ENCODE measurements at regions of chr1 and their contacts with region 1.

Region 1: DNA sequence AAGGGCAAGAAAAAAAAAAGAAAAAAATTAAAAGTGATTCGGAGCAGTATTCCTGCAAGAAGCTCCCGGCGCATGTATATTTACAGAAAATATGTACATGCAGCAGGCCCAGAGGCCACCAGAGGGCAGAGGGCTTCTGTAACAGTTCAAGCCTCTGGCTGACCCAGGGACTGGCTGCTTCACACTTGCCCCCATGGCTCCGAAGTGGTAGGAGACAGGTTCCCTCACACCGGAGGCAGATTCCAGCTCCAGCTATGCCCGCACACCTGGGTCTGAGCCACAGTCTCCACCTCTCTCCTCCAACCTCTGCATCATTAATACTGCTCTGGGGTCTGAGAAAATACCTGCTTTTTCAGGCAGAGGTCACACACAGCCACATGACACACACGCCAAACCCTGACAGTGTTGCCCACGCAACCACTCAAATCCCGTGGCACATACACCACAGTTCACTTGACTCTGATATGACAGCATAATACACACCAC is 2.2 kb upstream of the ARHGAP30 start:
- DNase-seq: peak; percentile 71 to 75 (median 74)
- H3K4me3 ChIP-seq: no peak overlapping the region
- H3K27ac ChIP-seq: no peak overlapping the region
- H3K4me1 ChIP-seq: peaks cover 12 to 67% (median 50%) of the 10 kb centered on the region in 4 experiments
- H3K27me3 ChIP-seq: no peaks in the 10 kb centered on the region

Region 2: GRCh38 chr1:160748181-160748877 is 323.6 kb before region 1 on chr1:
- CTCF ChIA-PET with region 1: no interaction called
- POLR2A ChIA-PET with region 1: no interaction called
- DNase-seq: no peak
- H3K4me3 ChIP-seq: no peak overlapping the region
- H3K27ac ChIP-seq: no peak overlapping the region
- H3K4me1 ChIP-seq: peaks cover 0 to 10% (median 1%) of the 10 kb centered on the region in 4 experiments
- H3K27me3 ChIP-seq: peaks cover 0 to 2% (median 0%) of the 10 kb centered on the region in 5 experiments

Region 3: DNA sequence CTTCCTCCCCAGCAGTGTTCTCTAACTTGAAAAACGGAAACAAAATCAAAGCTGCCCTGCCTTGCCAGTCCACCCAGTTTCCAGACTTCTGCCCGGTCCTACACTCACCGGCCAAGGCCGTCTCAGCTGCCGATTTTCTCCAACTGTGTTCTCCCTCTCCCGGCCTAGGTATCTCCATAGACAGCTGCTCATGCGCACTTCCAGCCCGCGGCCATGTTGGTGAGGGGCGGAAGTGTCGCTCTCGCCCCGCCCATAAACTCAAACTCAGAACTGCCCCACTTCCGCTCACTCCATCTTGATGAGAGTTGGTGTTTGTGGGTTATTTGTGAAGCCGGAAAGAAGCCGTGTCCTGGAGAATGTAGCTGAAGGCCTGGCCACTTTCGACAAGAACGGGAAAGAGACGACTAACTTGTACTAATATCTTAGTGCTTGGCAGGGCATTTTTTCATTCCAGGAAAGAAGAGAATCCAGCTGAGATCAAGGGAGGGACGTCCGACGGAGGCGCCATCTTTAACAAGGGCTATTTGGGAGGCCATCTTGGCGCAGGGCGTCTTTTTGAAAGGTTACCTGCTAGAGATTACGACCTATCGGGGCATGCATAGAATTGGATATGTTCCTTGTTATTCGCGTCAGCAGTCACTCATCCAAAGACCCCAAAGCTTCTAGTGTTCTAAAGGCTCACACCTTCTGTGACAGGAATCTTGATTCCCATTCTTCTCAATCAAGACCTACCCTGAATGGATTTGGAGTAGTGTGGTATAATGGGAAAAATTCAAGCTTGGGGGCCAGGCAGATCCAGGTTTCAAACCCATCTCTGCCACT is 26.0 kb before region 1 on chr1 and contains the start of gene USF1:
- CTCF ChIA-PET with region 1: interaction called, 166 read pairs
- POLR2A ChIA-PET with region 1: interaction called, 53 read pairs
- DNase-seq: peak; percentile 97 to 98 (median 98)
- H3K4me3 ChIP-seq: peak within 1 kb of the TSS; percentile 75 to 97 (median 91)
- H3K27ac ChIP-seq: peak within 1 kb of the TSS; percentile 95 to 97
- H3K4me1 ChIP-seq: peaks cover 8 to 31% (median 20%) of the 10 kb centered on the region in 4 experiments
- H3K27me3 ChIP-seq: no peaks in the 10 kb centered on the region

Region 4: DNA sequence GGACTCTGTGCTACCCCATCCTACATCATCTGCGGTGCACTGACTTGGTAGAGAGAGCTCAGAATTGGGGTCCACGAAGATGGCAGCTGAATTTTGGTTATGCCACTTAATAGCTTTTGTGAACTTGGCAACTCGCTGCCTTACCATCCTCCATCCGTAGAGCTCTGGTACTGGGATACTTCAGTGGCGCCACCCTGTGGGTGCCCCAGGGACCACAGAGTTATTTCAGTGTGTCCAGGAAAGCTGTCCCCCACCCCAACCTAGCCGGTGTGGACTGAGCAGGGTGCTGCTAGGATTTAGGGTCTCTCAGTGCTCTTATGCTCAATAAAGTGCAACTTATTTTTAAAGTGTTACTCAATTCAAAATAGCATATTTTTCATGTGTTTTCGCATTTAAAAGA is 17.1 kb before region 1 on chr1:
- CTCF ChIA-PET with region 1: interaction called, 13 read pairs
- POLR2A ChIA-PET with region 1: no interaction called
- DNase-seq: no peak
- H3K4me3 ChIP-seq: no peak overlapping the region
- H3K27ac ChIP-seq: no peak overlapping the region
- H3K4me1 ChIP-seq: no peaks in the 10 kb centered on the region
- H3K27me3 ChIP-seq: no peaks in the 10 kb centered on the region

Region 5: DNA sequence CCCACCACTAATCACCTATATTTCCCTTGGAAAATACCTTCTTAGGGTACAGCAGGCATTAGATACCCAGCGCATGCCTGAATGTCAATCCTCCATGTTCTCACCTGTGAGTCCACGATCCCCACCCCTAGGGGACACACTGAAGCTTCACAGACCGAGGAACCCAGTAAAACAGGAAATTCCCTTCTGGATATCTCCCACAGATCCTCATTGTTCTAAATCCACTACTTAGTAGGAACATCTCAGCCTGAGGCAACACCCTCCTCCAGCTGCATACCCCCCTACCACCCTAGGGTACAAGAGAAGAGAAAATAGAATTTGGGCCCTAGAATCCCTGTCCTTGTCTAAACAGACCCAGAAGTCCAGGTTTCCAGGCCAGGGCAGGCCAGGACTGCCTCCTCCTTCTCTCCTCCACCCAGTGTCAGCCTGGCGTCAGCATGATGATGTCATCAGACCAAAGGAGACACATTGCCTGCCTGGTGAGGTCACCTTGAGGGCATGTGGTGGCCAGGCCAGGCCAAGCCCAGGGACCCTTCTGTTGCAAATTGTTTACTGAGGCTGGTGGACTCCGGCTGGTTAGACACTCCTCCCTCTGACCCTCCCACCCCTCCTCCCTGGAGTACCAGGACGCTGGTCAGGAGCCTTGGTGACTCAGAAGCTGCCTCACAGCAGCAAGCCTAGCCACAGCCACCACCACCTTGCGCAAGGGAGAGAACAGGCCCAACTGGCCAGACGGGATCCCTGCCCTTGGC is 11.2 kb after region 1 on chr1:
- CTCF ChIA-PET with region 1: interaction called, 89 read pairs
- POLR2A ChIA-PET with region 1: no interaction called
- DNase-seq: peak in 1 of 3 donors; percentile 32
- H3K4me3 ChIP-seq: no peak overlapping the region
- H3K27ac ChIP-seq: no peak overlapping the region
- H3K4me1 ChIP-seq: peaks cover 0 to 18% (median 0%) of the 10 kb centered on the region in 4 experiments
- H3K27me3 ChIP-seq: peaks cover 0 to 5% (median 0%) of the 10 kb centered on the region in 5 experiments

Region 6: DNA sequence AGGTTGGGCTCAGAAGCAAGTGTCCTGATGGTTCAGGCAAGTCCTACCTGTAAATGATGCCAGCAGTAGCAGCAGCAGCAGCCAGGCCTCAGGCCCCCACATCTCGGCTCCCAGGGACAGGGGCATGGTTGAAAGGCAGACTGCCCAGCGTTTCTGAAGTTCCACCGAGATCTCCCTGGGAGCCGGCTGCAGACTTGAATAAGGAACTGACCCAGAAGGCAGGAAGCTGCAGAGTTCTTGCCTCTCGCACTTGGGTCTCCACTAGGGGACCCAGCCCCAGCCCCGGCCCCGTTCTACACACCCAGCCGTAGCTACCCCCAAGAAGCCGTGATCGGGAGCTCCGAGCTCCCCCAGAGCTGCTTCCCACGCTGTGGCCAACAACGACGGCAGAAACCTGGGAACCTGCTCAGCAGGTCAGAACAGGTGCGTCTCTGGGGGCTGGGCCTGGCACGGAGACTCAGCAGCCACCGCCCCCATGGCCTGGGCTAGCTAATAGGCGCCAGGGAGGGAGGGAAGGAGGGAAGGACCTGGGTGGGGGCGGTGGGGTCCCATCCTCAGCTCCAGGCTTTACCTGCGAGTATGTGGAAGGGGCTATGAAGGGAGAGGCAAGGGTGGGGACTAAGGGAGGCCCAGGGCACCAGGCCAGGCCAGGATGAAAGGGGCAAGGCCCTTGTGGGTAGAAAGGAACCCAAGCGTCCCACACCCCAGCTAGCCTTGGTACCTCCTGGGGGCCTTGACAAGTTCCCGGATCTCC is 17.4 kb after region 1 on chr1 and contains the start of gene NECTIN4:
- CTCF ChIA-PET with region 1: interaction called, 297 read pairs
- POLR2A ChIA-PET with region 1: interaction called, 3 read pairs
- DNase-seq: peak in 1 of 3 donors; percentile 37
- H3K4me3 ChIP-seq: no peak within 1 kb of the TSS
- H3K27ac ChIP-seq: no peak within 1 kb of the TSS
- H3K4me1 ChIP-seq: peaks cover 0 to 17% (median 2%) of the 10 kb centered on the region in 4 experiments
- H3K27me3 ChIP-seq: no peaks in the 10 kb centered on the region

Region 7: GRCh38 chr1:161132410-161133219 is 60.7 kb after region 1 on chr1 and contains the start of gene DEDD:
- CTCF ChIA-PET with region 1: interaction called, 107 read pairs
- POLR2A ChIA-PET with region 1: no interaction called
- DNase-seq: peak; percentile 97 to 98 (median 97)
- H3K4me3 ChIP-seq: peak within 1 kb of the TSS; percentile 82 to 97 (median 95)
- H3K27ac ChIP-seq: peak within 1 kb of the TSS; percentile 85 to 92
- H3K4me1 ChIP-seq: peaks cover 10 to 29% (median 21%) of the 10 kb centered on the region in 4 experiments
- H3K27me3 ChIP-seq: no peaks in the 10 kb centered on the region

Region 8: GRCh38 chr1:161225534-161226319 is 153.8 kb after region 1 on chr1 and contains the start of gene TOMM40L:
- CTCF ChIA-PET with region 1: no interaction called
- POLR2A ChIA-PET with region 1: no interaction called
- DNase-seq: peak; percentile 100
- H3K4me3 ChIP-seq: peak within 1 kb of the TSS; percentile 60 to 99 (median 90)
- H3K27ac ChIP-seq: peak within 1 kb of the TSS in 1 of 2 experiments; percentile 67
- H3K4me1 ChIP-seq: peaks cover 2 to 33% (median 30%) of the 10 kb centered on the region in 4 experiments
- H3K27me3 ChIP-seq: no peaks in the 10 kb centered on the region

Region 9: DNA sequence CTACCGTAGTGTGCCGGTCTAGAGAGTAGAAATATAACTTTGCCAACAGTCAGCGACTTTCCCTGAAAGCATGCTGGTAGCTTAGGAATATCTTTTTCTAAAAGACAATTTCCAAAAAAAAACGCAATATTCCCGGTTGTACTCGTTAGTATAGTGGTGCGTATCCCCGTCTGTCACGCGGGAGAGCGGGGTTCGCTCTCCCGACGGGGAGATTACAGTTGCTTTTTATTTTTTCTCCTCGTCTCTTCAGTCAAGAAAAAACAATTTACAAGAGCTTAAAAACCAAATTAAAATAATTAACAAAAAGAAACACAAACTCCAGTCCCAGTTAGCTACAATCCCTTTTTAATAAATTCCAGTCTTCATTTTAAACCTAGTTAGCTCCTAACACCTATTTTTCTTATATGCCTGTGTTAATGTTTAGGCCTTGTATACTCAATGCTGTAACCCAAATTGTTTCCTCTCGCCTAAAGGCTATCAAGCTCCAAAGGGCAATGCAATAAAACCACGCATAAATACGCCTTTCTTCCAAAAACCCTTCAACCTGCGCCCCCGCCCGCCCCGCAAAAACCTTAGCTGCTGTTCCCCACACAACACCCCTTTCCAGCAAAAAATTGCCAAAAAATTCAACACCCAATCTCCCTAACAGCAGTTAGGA is 460.2 kb after region 1 on chr1:
- CTCF ChIA-PET with region 1: no interaction called
- POLR2A ChIA-PET with region 1: no interaction called
- DNase-seq: no peak
- H3K4me3 ChIP-seq: peak overlapping the region in 1 of 7 experiments; percentile 74
- H3K27ac ChIP-seq: peak overlapping the region in 1 of 2 experiments; percentile 80
- H3K4me1 ChIP-seq: peaks cover 4 to 24% (median 9%) of the 10 kb centered on the region in 4 experiments
- H3K27me3 ChIP-seq: peaks cover 0 to 8% (median 0%) of the 10 kb centered on the region in 5 experiments